ENCODE measurements at regions of chr1 and their contacts with region 1.

Region 1: DNA sequence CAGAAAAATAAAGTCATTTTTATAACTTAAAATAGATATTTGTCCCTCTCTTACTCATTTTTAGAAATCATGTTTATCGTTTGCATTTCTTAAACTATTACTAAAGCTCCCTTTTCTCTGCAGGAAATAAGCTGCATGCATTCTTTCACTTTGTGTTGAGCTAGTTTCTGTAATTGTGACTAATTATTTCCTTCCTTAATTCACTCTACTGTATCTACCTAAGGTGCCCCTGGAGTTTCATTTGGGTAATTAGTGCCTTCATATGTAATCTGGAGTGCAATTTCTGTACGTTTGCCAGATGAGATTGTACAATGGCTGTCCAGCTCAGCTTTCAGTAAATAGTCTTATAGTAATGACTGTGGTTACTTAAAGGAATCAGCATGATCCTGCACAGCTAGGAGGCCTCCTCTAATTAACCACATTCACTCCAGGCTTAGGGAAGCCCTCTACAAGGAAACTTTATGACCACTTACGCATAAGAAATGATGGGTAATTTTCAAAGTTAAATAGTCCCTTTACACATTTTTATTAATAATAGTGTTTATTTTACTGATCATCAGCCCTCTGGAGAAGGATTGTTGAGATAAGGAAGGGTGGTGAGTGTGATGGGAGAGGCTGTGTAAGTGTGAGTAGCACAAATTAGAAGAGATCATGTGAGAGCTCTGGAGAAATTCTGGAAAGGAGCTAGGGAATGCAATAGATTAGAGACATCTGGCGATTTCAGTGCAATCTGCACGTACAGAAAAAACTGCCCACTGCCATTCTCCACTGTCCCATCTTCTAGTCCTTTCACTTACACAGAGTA is 86.8 kb downstream of the LRRC8C start:
- DNase-seq: peak; percentile 66
- H3K4me3 ChIP-seq: peak overlapping the region; percentile 46
- H3K27ac ChIP-seq: peak overlapping the region; percentile 61
- H3K4me1 ChIP-seq: peaks cover 46% of the 10 kb centered on the region
- CTCF ChIP-seq: 0 out of 2 replicates have a peak, but pooled peaks have one; percentile 17

Region 2: DNA sequence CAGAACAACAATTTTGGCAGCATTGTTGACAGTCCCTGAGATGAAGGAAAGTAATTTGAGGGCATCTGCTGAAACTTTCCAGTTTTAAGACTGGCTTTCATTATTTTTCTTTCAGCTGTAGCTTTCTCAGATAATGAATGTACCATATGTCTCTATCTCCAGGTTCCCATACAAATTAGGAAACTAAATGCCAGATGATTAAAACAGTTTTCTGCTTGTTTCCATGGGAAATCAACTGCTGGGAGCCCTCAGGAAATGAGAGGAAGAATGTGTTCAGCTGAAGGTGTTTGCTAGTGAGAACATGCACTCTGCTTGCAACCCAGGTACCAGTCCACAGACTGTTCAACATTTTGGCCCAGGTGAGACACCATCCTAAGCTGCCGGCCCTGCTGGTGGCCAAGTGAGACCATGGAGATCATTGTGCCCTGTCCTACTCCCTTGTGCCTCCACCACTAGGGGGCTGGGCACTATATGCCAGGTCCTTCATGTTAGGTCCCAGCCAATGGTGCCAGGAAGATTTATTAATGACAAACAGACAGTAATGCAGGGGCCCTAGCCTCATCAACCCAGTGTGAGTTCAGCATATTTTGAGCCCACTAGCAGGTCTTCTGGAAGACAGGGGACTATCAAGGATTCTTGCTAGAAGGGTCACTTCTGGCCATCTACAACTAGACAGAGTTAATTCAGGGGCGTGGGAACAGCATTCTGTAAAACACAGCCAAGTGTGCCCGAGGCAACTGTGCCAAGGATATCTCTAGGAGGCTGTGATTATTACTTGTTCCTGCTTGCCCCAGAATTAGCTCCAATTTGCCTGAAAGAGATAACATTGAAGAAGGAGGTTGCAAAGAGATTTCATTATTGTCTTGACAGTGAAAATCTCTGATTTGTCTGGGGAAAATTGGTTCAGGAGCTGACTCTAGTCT is 103.8 kb before region 1 on chr1:
- CTCF ChIA-PET with region 1: no interaction called
- POLR2A ChIA-PET with region 1: no interaction called
- intact Hi-C with region 1: no loop called
- DNase-seq: peak; percentile 51
- H3K4me3 ChIP-seq: no peak overlapping the region
- H3K27ac ChIP-seq: no peak overlapping the region
- H3K4me1 ChIP-seq: no peaks in the 10 kb centered on the region
- CTCF ChIP-seq: peak; percentile 75

Region 3: DNA sequence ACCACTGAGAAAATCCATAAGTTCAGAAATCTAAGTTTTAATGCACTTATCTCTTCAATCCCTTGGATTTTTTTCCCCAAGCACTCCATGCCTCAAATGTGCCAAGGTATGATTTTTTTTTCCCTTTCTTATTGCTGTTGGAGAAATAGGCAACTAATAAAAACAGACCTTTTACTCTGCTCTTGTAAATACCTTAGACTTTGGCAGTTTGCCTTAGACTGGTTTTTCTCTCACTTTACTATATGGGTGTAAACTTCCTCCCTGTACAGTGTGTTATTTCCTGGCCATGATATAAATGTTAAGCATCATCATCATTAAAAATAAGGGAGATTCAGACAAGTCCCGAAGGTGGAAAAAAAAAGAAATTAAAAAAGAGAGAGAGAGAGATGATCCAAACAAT is 21.1 kb before region 1 on chr1:
- CTCF ChIA-PET with region 1: no interaction called
- POLR2A ChIA-PET with region 1: interaction called, 21 read pairs
- intact Hi-C with region 1: no loop called
- DNase-seq: no peak
- H3K4me3 ChIP-seq: no peak overlapping the region
- H3K27ac ChIP-seq: no peak overlapping the region
- H3K4me1 ChIP-seq: peaks cover 71% of the 10 kb centered on the region
- CTCF ChIP-seq: no peak

Region 4: DNA sequence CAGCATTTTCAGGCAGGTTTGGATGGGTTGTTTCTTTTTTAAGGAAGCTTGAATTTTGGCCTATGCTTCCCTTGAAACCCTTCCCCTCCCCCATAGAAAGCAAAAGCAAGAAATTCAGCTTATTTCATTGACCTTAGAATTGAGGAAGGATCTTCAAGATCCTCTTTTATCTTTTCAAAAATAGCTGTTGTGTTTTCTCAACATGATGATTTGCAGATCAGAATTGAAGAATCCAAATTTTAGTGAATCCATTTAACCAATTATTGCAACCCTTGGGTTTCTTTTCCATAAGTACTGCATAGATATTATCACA is 13.0 kb before region 1 on chr1:
- CTCF ChIA-PET with region 1: interaction called, 3 read pairs
- POLR2A ChIA-PET with region 1: interaction called, 30 read pairs
- intact Hi-C with region 1: no loop called
- DNase-seq: peak; percentile 46
- H3K4me3 ChIP-seq: peak overlapping the region; percentile 44
- H3K27ac ChIP-seq: peak overlapping the region; percentile 84
- H3K4me1 ChIP-seq: peaks cover 41% of the 10 kb centered on the region
- CTCF ChIP-seq: no peak

Region 5: GRCh38 chr1:89757532-89757931 is 37.8 kb after region 1 on chr1:
- CTCF ChIA-PET with region 1: interaction called, 3 read pairs
- POLR2A ChIA-PET with region 1: interaction called, 14 read pairs
- intact Hi-C with region 1: loop called (anchors 5 kb)
- DNase-seq: peak; percentile 69
- H3K4me3 ChIP-seq: peak overlapping the region; percentile 25
- H3K27ac ChIP-seq: peak overlapping the region; percentile 18
- H3K4me1 ChIP-seq: peaks cover 18% of the 10 kb centered on the region
- CTCF ChIP-seq: no peak

Region 6: DNA sequence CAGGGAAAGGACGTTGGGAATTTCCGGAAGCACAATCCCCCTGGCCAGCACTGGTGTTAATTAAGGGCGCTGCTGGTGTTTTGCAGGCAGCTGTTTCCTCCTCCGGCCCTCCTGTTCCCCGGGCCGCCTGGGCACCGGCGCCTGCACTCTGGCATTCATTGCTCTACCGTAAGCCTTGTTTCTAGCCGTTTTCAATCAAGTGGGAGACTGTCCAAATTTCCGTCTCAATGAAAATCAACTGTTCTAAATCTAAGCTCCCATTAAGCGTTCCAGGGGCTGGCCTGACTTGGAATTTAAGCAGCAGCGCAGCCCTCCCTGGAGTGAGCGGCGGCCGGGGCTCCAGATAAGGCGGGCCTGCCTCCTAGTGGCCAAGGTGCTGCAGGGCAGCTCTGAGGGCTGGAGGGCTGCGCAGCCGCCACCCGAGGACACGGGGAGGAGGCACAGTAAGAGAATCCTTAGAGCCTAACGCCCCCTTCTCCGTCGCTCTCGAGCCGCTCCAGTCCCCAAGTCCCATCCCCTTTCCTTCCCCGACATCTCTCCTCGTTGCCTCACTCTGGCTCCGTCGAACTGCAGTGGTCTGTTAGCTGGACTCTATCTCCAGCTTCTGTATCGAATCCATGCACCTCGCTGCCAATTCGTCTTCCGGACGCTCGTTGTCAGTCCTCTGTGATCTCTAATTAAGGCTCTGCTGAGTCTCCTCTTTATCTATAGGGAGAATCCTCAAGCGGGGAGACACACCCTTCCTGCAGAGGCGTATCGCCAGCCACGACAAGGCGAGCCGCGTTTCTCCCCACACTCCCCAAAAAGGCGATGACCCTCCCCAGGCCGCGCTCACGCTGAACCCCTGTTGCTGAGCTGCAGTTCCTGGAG is 43.3 kb after region 1 on chr1:
- CTCF ChIA-PET with region 1: interaction called, 3 read pairs
- POLR2A ChIA-PET with region 1: interaction called, 14 read pairs
- intact Hi-C with region 1: loop called (anchors 5 kb)
- DNase-seq: peak; percentile 87
- H3K4me3 ChIP-seq: peak overlapping the region; percentile 37
- H3K27ac ChIP-seq: no peak overlapping the region
- H3K4me1 ChIP-seq: peaks cover 16% of the 10 kb centered on the region
- CTCF ChIP-seq: peak; percentile 96

Region 7: GRCh38 chr1:89883030-89883379 is 163.3 kb after region 1 on chr1:
- CTCF ChIA-PET with region 1: no interaction called
- POLR2A ChIA-PET with region 1: no interaction called
- intact Hi-C with region 1: no loop called
- DNase-seq: no peak
- H3K4me3 ChIP-seq: no peak overlapping the region
- H3K27ac ChIP-seq: no peak overlapping the region
- H3K4me1 ChIP-seq: no peaks in the 10 kb centered on the region
- CTCF ChIP-seq: no peak

Region 8: GRCh38 chr1:89935235-89935634 is 215.5 kb after region 1 on chr1:
- CTCF ChIA-PET with region 1: no interaction called
- POLR2A ChIA-PET with region 1: no interaction called
- intact Hi-C with region 1: no loop called
- DNase-seq: no peak
- H3K4me3 ChIP-seq: no peak overlapping the region
- H3K27ac ChIP-seq: no peak overlapping the region
- H3K4me1 ChIP-seq: no peaks in the 10 kb centered on the region
- CTCF ChIP-seq: no peak

Region 9: DNA sequence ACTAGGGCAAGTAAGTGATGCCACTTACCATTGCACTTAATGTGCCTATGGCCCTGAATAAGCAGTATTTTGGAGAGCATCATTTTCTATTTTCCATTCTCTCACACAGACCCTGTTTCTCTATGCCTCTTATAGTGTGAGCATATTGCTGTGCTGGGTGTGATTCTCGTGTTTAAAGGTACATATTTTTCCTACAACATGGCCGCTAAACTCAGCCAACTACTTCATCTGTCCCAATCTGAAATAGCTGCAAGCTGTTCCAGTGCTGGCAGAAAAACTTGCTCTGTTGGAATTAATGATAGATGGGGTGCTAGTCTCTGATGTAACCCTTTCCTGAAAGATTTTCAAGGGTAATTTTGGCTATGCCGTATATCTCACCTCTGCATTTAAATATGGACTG is 372.7 kb after region 1 on chr1:
- CTCF ChIA-PET with region 1: no interaction called
- POLR2A ChIA-PET with region 1: no interaction called
- intact Hi-C with region 1: no loop called
- DNase-seq: no peak
- H3K4me3 ChIP-seq: no peak overlapping the region
- H3K27ac ChIP-seq: no peak overlapping the region
- H3K4me1 ChIP-seq: no peaks in the 10 kb centered on the region
- CTCF ChIP-seq: no peak